Aorta (tissue), 5 donors: ENCODE measurements at regions of chr5 and their contacts with region 1.

Region 1: GRCh38 chr5:80507663-80508062 is 19.8 kb downstream of the FAM151B start:
- DNase-seq: no peak
- ATAC-seq: no peak
- H3K4me3 ChIP-seq: no peak overlapping the region
- H3K27ac ChIP-seq: no peak overlapping the region
- H3K4me1 ChIP-seq: peaks cover 0 to 2% of the 10 kb centered on the region in 2 donors
- H3K27me3 ChIP-seq: no peaks in the 10 kb centered on the region

Region 2: DNA sequence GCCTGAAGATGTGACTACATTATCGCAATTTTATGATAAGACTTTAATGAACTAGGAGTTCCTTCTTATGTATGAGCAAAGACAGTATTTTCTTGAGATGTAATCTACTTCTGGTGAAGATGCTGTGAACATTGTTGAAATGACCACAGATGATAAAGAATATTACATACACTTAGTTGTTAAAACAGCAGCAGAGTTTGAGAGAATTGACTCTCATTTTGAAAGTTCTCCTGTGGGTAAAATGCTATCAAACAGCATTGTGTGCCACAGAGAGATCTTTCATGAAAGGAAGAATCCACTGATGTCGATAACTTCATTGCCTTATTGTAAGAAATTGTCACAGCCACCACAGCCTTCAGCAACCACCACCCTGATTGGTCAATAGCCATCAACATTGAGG is 11.8 kb before region 1 on chr5:
- intact Hi-C with region 1: loop called in 1 of 2 experiments (anchors 2 kb)
- DNase-seq: no peak
- ATAC-seq: no peak
- H3K4me3 ChIP-seq: no peak overlapping the region
- H3K27ac ChIP-seq: no peak overlapping the region
- H3K4me1 ChIP-seq: no peaks in the 10 kb centered on the region
- H3K27me3 ChIP-seq: no peaks in the 10 kb centered on the region